ENCODE measurements at regions of chr7 and their contacts with region 1.

Region 1: DNA sequence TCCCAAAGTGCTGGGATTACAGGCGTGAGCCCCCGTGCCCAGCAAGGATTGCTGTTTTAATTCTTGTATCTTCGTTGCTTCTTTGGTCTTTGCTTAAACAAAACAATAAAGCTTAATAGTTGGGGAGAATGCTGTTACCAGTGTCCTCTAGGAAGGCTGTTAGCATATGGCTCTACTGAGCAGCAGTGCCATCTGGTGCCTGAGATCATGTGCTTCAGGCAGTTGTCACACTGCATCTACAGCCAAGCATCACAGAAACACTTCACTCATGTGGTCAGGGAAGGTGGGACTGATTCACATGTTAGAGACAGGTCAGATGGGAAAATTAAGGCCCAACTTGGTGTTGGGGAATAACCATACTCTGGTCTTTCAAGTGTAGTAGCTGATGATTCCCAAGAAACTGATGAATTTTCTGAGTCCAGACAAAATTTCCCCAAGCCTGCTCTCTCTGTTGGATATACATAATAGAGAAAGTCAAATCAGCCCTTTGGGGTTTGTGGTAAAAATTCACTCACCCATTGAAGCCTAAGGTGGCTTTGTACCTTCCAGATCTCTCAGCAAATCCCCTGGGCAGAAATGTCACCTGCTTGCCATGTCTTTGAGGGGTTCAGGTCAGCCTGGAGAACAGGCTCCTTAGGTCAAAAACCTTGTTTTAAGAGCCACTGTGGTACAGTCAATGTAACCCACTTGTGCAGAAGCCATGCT is 28.4 kb downstream of the UBE2D4 start:
- DNase-seq: peak; percentile 66
- H3K4me3 ChIP-seq: no peak overlapping the region
- H3K27ac ChIP-seq: no peak overlapping the region
- H3K4me1 ChIP-seq: no peaks in the 10 kb centered on the region
- H3K27me3 ChIP-seq: no peaks in the 10 kb centered on the region
- CTCF ChIP-seq: peak; percentile 56 to 73

Region 2: DNA sequence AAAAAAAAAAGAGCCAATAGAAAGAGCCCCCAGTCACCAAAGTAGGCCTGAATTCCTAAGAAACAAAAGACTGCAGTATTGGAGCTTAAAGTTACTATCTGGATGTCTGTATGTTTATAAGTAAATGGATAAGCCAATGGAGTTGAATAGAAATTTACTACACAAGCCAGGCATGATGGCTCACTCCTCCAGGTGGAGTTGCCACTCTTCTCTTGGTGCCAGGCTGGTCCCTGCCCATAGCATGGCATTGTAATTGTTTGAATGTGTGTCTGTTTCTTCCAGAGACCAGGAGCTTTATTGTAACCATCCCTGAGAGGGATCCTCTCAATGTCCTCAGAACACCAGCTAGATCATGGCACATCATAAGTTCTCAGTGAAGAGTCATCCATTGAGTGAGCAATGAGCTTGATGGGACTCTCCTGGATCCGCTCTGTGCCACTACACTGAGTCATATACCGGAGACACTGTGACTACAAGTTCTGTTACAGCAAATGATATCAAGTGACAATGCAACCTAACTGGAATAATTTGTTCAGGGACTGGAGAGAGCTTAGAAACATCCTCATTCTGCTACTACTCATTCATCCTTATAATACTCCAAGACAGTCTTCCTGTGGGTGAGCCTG is 110.5 kb before region 1 on chr7:
- CTCF ChIA-PET with region 1: interaction called, 7 read pairs
- dilution Hi-C with region 1: no loop called
- in situ Hi-C with region 1: no loop called
- intact Hi-C with region 1: loop called (anchors 2 kb)
- DNase-seq: no peak
- H3K4me3 ChIP-seq: no peak overlapping the region
- H3K27ac ChIP-seq: no peak overlapping the region
- H3K4me1 ChIP-seq: no peaks in the 10 kb centered on the region
- H3K27me3 ChIP-seq: no peaks in the 10 kb centered on the region
- CTCF ChIP-seq: no peak

Region 3: DNA sequence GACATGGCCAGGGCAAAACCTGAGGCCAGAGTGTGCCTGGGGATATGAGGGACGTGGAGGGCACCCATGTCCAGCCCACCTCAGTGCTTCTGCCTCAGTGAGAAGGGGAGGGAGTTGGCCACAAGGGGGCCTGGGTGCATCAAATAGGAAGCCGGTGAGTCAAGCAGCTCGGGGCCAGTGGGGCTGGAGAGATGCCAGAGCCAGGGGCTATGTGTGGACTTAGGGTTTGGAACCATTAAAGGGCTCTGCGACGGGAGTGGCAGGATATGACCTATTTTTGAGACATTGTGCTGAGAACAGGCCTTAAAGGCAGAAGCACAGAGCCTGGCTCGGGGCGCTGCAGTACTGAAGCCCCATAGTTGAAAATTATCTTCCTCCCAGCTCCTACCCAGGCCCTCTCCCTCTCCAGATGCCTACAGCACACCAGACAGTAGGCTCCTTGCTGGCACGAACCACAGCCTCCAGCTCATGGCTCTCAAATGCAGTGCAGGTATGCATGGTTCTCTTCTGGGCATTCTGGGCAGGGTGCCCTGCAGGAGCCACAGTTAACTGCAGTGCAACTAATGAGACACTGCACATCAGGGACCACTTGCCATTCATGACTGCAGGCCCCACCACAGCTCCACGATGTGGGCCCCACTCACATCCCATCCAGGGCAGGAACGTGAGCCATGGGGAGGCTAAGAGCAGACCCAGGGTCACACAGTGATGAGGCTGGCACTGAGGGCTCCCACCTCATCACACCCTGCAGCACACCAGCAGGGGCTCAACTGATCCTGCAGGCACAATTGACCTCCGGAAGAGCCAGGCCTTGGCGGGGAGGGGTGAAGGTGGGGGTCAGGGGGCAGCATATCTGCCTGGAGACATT is 117.9 kb after region 1 on chr7:
- CTCF ChIA-PET with region 1: no interaction called
- dilution Hi-C with region 1: no loop called
- in situ Hi-C with region 1: no loop called
- intact Hi-C with region 1: no loop called
- DNase-seq: peak; percentile 83
- H3K4me3 ChIP-seq: no peak overlapping the region
- H3K27ac ChIP-seq: no peak overlapping the region
- H3K4me1 ChIP-seq: peaks cover 40% of the 10 kb centered on the region
- H3K27me3 ChIP-seq: no peaks in the 10 kb centered on the region
- CTCF ChIP-seq: peak; percentile 75 to 76

Measured in mammary epithelial cell (primary cell).